PC-3 (cell line): ENCODE measurements at regions of chr20 and their contacts with region 1.

Region 1: GRCh38 chr20:45779011-45779915 is 12.4 kb downstream of the WFDC3 start:
- DNase-seq: peak; percentile 99
- ATAC-seq: peak; percentile 63
- H3K4me3 ChIP-seq: peak overlapping the region; percentile 11; the same call in 1 of the 2 replicates
- H3K27ac ChIP-seq: peak overlapping the region; percentile 99
- H3K4me1 ChIP-seq: peaks cover 62% of the 10 kb centered on the region
- H3K27me3 ChIP-seq: no peaks in the 10 kb centered on the region
- CTCF ChIP-seq: no peak

Region 2: GRCh38 chr20:45695496-45695895 is 83.8 kb before region 1 on chr20:
- CTCF ChIA-PET with region 1: no interaction called
- POLR2A ChIA-PET with region 1: no interaction called
- intact Hi-C with region 1: no loop called
- DNase-seq: peak; percentile 58
- ATAC-seq: peak; percentile 45
- H3K4me3 ChIP-seq: no peak overlapping the region
- H3K27ac ChIP-seq: no peak overlapping the region
- H3K4me1 ChIP-seq: peaks cover 22% of the 10 kb centered on the region
- H3K27me3 ChIP-seq: no peaks in the 10 kb centered on the region
- CTCF ChIP-seq: no peak

Region 3: DNA sequence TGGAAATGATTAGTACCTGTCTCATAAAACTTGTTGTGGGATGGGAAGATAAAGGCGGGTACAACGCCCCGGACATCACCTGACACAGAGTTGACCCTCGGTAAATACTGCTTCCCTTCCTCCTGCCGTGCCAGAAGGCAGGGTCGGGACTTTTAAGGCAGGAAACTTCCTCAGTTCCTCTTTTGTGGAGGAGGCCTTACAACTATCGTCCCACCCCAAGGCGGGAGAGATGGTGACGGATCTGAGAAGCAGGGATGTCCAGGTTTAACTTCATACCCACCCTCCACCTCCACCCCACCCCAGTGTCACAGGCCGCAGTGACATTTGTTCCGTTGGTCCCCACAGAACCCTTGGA is 13.0 kb after region 1 on chr20:
- CTCF ChIA-PET with region 1: no interaction called
- POLR2A ChIA-PET with region 1: interaction called, 12 read pairs
- intact Hi-C with region 1: loop called (anchors 1 kb)
- DNase-seq: no peak
- ATAC-seq: no peak; the same call in 1 of the 2 replicates
- H3K4me3 ChIP-seq: peak overlapping the region; percentile 96
- H3K27ac ChIP-seq: peak overlapping the region; percentile 92
- H3K4me1 ChIP-seq: peaks cover 27% of the 10 kb centered on the region
- H3K27me3 ChIP-seq: no peaks in the 10 kb centered on the region
- CTCF ChIP-seq: no peak

Region 4: GRCh38 chr20:45798935-45799642 is 19.8 kb after region 1 on chr20:
- CTCF ChIA-PET with region 1: no interaction called
- POLR2A ChIA-PET with region 1: interaction called, 12 read pairs
- intact Hi-C with region 1: no loop called
- DNase-seq: peak; percentile 82
- ATAC-seq: peak; percentile 88
- H3K4me3 ChIP-seq: no peak overlapping the region
- H3K27ac ChIP-seq: peak overlapping the region; percentile 11
- H3K4me1 ChIP-seq: 0 out of 2 replicates have a peak, but pooled peaks cover under 1% of the 10 kb centered on the region
- H3K27me3 ChIP-seq: no peaks in the 10 kb centered on the region
- CTCF ChIP-seq: peak; percentile 90

Region 5: DNA sequence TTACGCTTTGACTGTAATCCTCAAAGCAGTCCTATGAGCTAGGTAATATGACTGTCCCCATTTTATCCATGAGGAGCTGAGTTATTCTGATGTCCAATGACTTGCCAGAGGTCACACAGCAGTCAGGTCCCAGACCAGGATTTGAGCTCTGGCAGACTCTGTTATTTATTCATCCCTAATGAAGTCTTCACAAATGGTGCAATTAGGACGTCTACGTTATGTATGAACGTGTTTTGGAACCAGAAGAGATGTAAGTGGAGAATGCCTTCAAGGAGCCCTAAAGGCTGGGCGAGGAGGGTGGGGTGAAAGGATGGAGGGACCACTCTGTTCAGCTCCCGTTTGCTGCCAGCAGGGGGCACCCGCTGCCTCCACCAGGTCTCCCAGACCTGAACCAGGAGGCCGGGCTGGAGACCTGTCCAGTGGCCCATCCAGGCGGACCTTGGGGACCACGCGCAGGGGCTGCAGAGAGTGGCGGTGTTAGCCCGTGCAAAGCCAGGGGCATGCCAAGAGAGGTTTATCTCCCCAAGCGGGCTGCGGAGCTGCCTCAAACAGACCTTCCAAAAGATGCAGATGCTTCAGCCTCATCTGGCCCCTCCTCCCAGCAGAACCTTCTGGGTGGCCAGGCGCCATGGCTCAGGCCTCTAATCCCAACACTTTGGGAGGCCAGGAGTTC is 208.0 kb after region 1 on chr20:
- CTCF ChIA-PET with region 1: no interaction called
- POLR2A ChIA-PET with region 1: no interaction called
- intact Hi-C with region 1: no loop called
- DNase-seq: peak; percentile 87
- ATAC-seq: peak; percentile 99
- H3K4me3 ChIP-seq: no peak overlapping the region
- H3K27ac ChIP-seq: no peak overlapping the region
- H3K4me1 ChIP-seq: peaks cover 8% of the 10 kb centered on the region
- H3K27me3 ChIP-seq: no peaks in the 10 kb centered on the region
- CTCF ChIP-seq: peak; percentile 98